ENCODE measurements at regions of chr12 and their contacts with region 1.

Region 1: DNA sequence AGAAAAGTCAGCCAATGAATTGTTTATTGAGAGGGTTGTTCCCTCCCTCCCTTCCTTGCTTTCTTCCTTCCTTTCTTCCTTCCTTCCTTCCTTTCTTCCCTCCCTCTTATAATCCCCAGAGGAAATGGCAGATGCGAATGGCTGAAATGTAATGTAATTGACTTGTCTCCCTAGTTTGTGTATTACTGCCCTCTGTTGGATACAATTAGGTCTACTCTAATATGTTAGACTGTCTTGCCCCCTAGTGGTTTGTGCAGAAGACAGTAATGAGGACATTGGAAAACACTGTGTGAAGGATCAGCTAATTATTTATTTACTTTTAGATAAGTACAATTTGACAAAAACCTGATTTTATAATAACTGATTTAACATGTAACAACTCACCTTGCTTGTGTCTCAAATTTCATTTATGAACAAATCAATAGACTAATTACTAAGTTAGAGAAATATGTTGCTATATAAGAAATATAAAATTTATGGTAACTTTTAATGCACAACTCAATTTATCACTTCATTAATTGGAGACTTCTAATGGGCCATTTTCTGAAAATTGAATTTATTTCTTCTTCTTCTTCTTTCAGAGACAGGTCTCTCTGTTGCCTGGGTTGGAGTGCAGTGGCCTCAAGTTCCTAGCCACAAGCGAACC is 229.8 kb upstream of the LRIG3 start:
- DNase-seq: no peak
- ATAC-seq: peak; percentile 84 to 94 (median 92)
- H3K4me3 ChIP-seq: no peak overlapping the region
- H3K27ac ChIP-seq: no peak overlapping the region
- H3K4me1 ChIP-seq: no peaks in the 10 kb centered on the region
- H3K27me3 ChIP-seq: no peaks in the 10 kb centered on the region
- CTCF ChIP-seq: peak; percentile 92

Region 2: DNA sequence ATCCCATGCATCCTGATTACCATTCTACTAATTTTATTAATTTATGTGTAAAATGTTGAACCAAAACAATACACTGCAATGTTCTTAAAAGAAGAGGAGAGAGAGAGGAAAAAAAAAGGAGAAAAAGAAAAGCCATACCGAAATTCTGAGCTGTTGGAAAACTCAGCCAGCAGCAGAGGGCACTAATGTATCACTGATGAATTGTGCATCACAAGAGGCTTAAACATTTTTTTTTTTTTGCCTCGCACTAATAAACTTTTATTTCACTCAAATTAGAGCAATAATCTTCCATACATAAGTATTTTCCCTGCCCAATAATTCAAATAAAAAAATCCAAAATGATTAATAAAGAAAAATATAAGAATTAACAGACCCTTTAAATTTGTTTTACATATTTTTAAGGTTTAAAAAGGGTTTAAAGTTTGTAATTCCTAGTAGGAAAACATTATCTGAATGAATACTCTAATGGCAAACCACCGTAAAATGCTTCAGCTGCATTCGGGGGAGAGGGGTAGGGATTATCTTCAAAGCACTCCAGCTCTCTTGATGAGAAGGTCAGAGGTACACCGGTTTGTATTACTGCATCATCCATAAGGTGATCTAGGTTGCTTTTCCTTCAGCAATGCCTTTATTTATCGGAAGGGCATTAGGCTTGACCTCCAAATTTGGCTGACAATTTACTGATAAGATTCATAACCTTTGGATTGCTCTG is 1166.8 kb before region 1 on chr12:
- intact Hi-C with region 1: loop called (anchors 5 kb)
- DNase-seq: no peak
- ATAC-seq: peak in 1 of 4 donors; percentile 66
- H3K4me3 ChIP-seq: no peak overlapping the region
- H3K27ac ChIP-seq: no peak overlapping the region
- H3K4me1 ChIP-seq: peaks cover 5% of the 10 kb centered on the region
- H3K27me3 ChIP-seq: no peaks in the 10 kb centered on the region
- CTCF ChIP-seq: peak; percentile 74

Region 3: DNA sequence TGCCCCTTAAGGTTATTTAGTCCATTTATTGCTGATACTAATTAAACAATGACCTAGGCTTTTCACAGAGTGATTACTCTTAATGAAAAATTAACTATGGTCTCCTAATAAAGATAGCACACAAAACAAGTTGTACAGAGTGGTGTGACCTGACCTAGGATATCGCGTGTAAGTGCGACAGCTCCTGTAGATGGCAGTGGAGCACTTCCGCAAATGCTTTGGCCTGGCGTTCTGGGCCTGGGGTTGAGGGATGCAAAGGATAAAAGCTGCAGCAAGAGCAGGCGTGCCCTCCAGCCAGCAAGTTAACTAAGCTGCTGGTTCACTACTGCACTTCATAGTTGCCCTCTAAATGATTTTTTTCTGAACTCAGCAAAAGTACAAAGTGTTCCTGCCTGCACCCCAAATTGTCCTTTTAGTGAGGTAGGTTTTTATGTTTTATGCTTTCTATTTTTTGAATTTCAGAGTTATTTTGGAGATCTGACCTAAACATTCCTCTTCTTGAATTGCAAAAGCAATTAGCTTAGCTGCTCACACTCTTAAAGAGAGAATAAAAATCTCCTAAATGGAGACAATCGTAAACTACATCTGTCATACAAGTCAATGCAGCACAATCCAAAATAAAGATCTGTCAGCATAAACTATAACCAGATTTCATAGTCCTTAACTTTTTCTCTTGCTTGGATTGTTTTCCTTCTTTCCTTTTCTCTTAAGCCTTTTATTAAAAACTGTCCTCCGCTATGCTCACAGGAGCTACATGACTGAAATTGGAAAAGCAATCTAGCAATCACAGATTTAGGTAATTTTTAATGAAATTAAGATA is 609.4 kb before region 1 on chr12:
- intact Hi-C with region 1: loop called (anchors 2 to 5 kb)
- DNase-seq: peak; percentile 58 to 64
- ATAC-seq: peak; percentile 80 to 88 (median 84)
- H3K4me3 ChIP-seq: no peak overlapping the region
- H3K27ac ChIP-seq: no peak overlapping the region
- H3K4me1 ChIP-seq: no peaks in the 10 kb centered on the region
- H3K27me3 ChIP-seq: no peaks in the 10 kb centered on the region
- CTCF ChIP-seq: peak; percentile 78

Region 4: GRCh38 chr12:58847901-58848600 is 302.1 kb before region 1 on chr12:
- intact Hi-C with region 1: no loop called
- DNase-seq: no peak
- ATAC-seq: no peak
- H3K4me3 ChIP-seq: no peak overlapping the region
- H3K27ac ChIP-seq: no peak overlapping the region
- H3K4me1 ChIP-seq: no peaks in the 10 kb centered on the region
- H3K27me3 ChIP-seq: peaks cover 0 to 4% (median 0%) of the 10 kb centered on the region in 3 donors
- CTCF ChIP-seq: no peak

Region 5: GRCh38 chr12:59113831-59114615 is 36.1 kb before region 1 on chr12:
- intact Hi-C with region 1: loop called in 1 of 2 experiments (anchors 5 kb)
- DNase-seq: peak; percentile 50 to 67
- ATAC-seq: peak in 3 of 4 donors; percentile 53 to 63 (median 54)
- H3K4me3 ChIP-seq: no peak overlapping the region
- H3K27ac ChIP-seq: no peak overlapping the region
- H3K4me1 ChIP-seq: no peaks in the 10 kb centered on the region
- H3K27me3 ChIP-seq: no peaks in the 10 kb centered on the region
- CTCF ChIP-seq: peak; percentile 69